ENCODE measurements at regions of chr17 and their contacts with region 1.

Region 1: GRCh38 chr17:34443619-34444469 is 80.8 kb upstream of the CCL1 start:
- DNase-seq: peak; percentile 43 to 48
- ATAC-seq: peak; percentile 77 to 90
- H3K4me3 ChIP-seq: no peak overlapping the region
- H3K27ac ChIP-seq: no peak overlapping the region
- H3K4me1 ChIP-seq: no peaks in the 10 kb centered on the region
- CTCF ChIP-seq: peak; percentile 45
- EP300 ChIP-seq: no peak
- POLR2A ChIP-seq: no peak
- RAD21 ChIP-seq: peak; percentile 70 to 80

Region 2: GRCh38 chr17:34406226-34406625 is 37.6 kb before region 1 on chr17:
- CTCF ChIA-PET with region 1: no interaction called
- POLR2A ChIA-PET with region 1: no interaction called
- DNase-seq: no peak
- ATAC-seq: no peak
- H3K4me3 ChIP-seq: no peak overlapping the region
- H3K27ac ChIP-seq: no peak overlapping the region
- H3K4me1 ChIP-seq: no peaks in the 10 kb centered on the region
- CTCF ChIP-seq: no peak
- EP300 ChIP-seq: no peak
- POLR2A ChIP-seq: no peak
- RAD21 ChIP-seq: no peak

Region 3: GRCh38 chr17:34420254-34420766 is 23.5 kb before region 1 on chr17:
- CTCF ChIA-PET with region 1: interaction called, 29 read pairs
- POLR2A ChIA-PET with region 1: no interaction called
- DNase-seq: peak; percentile 66 to 81
- ATAC-seq: peak; percentile 60 to 89; a peak in 5 of 6 replicates
- H3K4me3 ChIP-seq: no peak overlapping the region
- H3K27ac ChIP-seq: no peak overlapping the region
- H3K4me1 ChIP-seq: no peaks in the 10 kb centered on the region
- CTCF ChIP-seq: peak; percentile 91
- EP300 ChIP-seq: no peak
- POLR2A ChIP-seq: no peak
- RAD21 ChIP-seq: peak; percentile 91 to 96

Region 4: DNA sequence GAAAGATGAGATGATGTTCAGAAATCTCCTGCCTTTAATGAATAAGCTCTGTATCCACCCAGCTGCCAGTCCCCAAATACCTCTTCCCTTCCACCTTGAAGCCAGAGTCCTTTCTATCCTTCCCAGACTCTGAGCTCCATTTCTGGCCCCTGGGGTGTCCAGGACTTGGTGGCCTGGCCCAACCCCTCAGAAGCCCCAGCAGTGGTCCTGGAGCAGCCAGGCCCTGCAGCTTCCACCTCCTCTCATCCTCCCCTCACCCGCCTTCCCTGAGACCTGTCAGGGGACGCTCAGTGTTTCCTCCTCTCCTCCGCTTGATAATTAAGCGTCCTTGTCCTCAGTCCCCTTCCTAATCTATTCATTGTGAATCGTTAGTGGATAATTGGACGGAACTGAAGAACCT is 14.4 kb after region 1 on chr17:
- CTCF ChIA-PET with region 1: interaction called, 12 read pairs
- POLR2A ChIA-PET with region 1: no interaction called
- DNase-seq: no peak
- ATAC-seq: no peak
- H3K4me3 ChIP-seq: no peak overlapping the region
- H3K27ac ChIP-seq: no peak overlapping the region
- H3K4me1 ChIP-seq: no peaks in the 10 kb centered on the region
- CTCF ChIP-seq: no peak
- EP300 ChIP-seq: no peak
- POLR2A ChIP-seq: no peak
- RAD21 ChIP-seq: no peak

Measured in A549 (cell line).